Breast epithelium (tissue), 4 donors: ENCODE measurements at regions of chr9 and their contacts with region 1.

Region 1: DNA sequence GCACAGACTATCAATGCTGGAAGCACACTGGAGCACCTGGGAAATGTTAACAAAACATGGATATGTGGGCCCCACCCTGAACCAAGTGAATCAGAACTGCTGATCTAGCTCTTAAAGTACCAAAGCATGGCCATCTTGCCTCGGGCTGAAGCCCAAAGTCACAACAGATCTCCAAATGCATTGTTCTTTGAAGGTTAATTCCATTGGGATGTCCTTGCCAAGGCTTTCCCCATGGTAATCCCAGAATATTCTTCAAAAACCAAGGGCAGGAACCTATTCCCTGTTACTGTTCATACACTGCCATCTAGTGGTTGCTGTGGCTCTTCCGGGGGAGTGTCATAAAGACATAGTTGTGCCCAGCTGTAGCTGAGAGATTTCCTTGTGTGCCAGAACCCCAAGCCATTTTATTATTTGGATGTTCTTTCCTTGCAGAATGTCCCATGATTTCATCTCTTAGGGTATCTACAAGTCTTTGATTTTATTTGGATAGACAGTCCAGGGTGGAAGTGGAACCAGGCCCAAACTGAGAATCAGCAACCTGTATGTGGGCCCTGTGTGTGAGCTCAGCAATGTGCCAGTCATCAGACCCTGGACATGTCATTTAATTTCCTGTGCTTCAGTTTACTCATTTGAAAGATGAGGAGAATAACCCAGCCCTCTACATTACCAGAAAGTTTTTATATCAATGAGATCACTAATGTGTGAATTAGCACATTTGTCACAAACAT is 290.0 kb downstream of the ACTL7B start:
- DNase-seq: peak in 1 of 2 donors; percentile 57
- H3K4me3 ChIP-seq: no peak overlapping the region
- H3K27ac ChIP-seq: no peak overlapping the region
- H3K4me1 ChIP-seq: no peaks in the 10 kb centered on the region
- H3K27me3 ChIP-seq: no peaks in the 10 kb centered on the region
- CTCF ChIP-seq: peak; percentile 79 to 84 (median 82)
- POLR2A ChIP-seq: no peak

Region 2: DNA sequence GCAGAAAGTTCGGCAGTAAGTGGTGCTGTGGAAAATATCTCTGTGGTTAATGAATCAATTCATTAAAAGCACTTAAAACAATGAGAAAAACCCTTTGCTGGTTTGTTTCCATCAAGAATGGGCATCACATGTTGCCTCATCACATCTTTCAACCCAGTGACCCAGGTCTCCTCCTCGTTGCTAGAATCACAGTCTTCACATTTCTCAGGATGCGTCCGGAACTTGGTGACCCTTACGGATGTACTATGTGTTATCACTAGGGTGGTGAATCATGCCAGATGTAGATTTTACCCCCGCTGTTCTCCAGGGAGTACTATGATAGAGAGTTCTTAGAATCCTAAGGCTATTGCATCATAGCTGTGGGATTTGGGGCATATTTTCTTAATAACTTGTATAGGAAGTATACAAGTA is 858.4 kb before region 1 on chr9:
- intact Hi-C with region 1: loop called (anchors 10 kb)
- DNase-seq: no peak
- H3K4me3 ChIP-seq: no peak overlapping the region
- H3K27ac ChIP-seq: no peak overlapping the region
- H3K4me1 ChIP-seq: no peaks in the 10 kb centered on the region
- H3K27me3 ChIP-seq: no peaks in the 10 kb centered on the region
- CTCF ChIP-seq: no peak
- POLR2A ChIP-seq: no peak